Heart left ventricle (tissue), 16 donors: ENCODE measurements at regions of chr17 and their contacts with region 1.

Region 1: GRCh38 chr17:77088455-77089123 is 52.2 kb upstream of the SEC14L1 start:
- DNase-seq: peak; percentile 93 to 95 (median 95)
- ATAC-seq: peak; percentile 94 to 96 (median 94)
- H3K4me3 ChIP-seq: peak overlapping the region; percentile 31 to 94 (median 74)
- H3K27ac ChIP-seq: peak overlapping the region; percentile 69 to 96 (median 89)
- H3K4me1 ChIP-seq: peaks cover 2 to 42% (median 25%) of the 10 kb centered on the region in 12 donors
- H3K27me3 ChIP-seq: peaks cover 0 to 2% (median 0%) of the 10 kb centered on the region in 9 donors
- CTCF ChIP-seq: peak; percentile 59 to 96 (median 81)
- POLR2A ChIP-seq: peak in 1 of 2 donors; percentile 65

Region 2: GRCh38 chr17:76997981-76998531 is 90.5 kb before region 1 on chr17:
- intact Hi-C with region 1: no loop called
- DNase-seq: no peak
- ATAC-seq: peak in 1 of 4 donors; percentile 9
- H3K4me3 ChIP-seq: peak overlapping the region in 1 of 12 donors; percentile 20
- H3K27ac ChIP-seq: peak overlapping the region in 1 of 12 donors; percentile 27
- H3K4me1 ChIP-seq: peaks cover 0 to under 1% (median 0%) of the 10 kb centered on the region in 12 donors
- H3K27me3 ChIP-seq: peaks cover 0 to 30% (median 3%) of the 10 kb centered on the region in 9 donors
- CTCF ChIP-seq: no peak
- POLR2A ChIP-seq: no peak

Region 3: DNA sequence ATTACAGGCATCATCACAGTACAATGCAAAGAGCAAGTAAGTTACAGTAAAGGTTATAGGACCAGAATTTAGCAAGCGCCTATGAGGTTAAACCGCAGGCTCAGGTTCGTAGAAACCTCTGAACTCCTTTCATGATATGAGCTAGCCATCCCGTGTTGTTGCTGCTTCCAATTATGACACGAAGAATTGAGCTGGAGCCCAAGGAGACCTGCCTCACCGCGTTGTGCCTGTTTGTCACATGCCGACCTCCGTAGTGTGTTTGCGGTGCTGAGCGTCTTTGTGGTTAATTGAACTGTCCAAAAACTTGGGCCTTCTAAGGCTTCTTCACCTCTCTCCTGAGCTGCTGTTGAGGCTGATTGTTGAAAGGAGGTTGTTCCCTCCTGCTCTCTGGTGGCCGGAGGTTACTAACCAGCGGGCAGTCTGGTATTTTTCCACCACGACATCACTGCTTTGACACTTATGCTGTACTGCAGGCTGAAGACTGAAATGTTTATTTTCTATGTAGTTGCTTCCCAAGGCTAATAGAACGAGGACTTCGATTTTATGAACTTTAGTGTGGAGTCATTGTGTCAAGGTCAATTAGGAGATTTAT is 119.7 kb after region 1 on chr17:
- intact Hi-C with region 1: loop called in 4 of 10 experiments (anchors 1 to 10 kb)
- DNase-seq: peak in 4 of 5 donors; percentile 56 to 63 (median 58)
- ATAC-seq: peak; percentile 34 to 82 (median 72)
- H3K4me3 ChIP-seq: no peak overlapping the region
- H3K27ac ChIP-seq: peak overlapping the region; percentile 21 to 72 (median 55)
- H3K4me1 ChIP-seq: peaks cover 4 to 70% (median 35%) of the 10 kb centered on the region in 12 donors
- H3K27me3 ChIP-seq: no peaks in the 10 kb centered on the region
- CTCF ChIP-seq: peak in 10 of 12 donors; percentile 17 to 60 (median 35)
- POLR2A ChIP-seq: no peak

Region 4: GRCh38 chr17:77247048-77247541 is 158.5 kb after region 1 on chr17:
- intact Hi-C with region 1: loop called (anchors 1 to 2 kb)
- DNase-seq: peak; percentile 83 to 94 (median 86)
- ATAC-seq: peak; percentile 77 to 95 (median 91)
- H3K4me3 ChIP-seq: peak overlapping the region; percentile 39 to 88 (median 69)
- H3K27ac ChIP-seq: peak overlapping the region in 8 of 12 donors; percentile 11 to 79 (median 58)
- H3K4me1 ChIP-seq: peaks cover 0 to 29% (median 12%) of the 10 kb centered on the region in 12 donors
- H3K27me3 ChIP-seq: peaks cover 0 to 7% (median 0%) of the 10 kb centered on the region in 9 donors
- CTCF ChIP-seq: peak; percentile 95 to 100 (median 99)
- POLR2A ChIP-seq: peak in 1 of 2 donors; percentile 31